Left ventricle myocardium inferior (tissue), 1 donor: ENCODE measurements at regions of chr3 and their contacts with region 1.

Region 1: GRCh38 chr3:129558772-129559564 is 16.0 kb downstream of the H1-8 start:
- DNase-seq: no peak
- H3K4me3 ChIP-seq: no peak overlapping the region
- H3K27ac ChIP-seq: peak overlapping the region; percentile 93
- H3K4me1 ChIP-seq: peaks cover 99% of the 10 kb centered on the region
- H3K27me3 ChIP-seq: no peaks in the 10 kb centered on the region
- CTCF ChIP-seq: no peak

Region 2: GRCh38 chr3:129077222-129077621 is 481.7 kb before region 1 on chr3:
- intact Hi-C with region 1: no loop called
- DNase-seq: no peak
- H3K4me3 ChIP-seq: no peak overlapping the region
- H3K27ac ChIP-seq: no peak overlapping the region
- H3K4me1 ChIP-seq: no peaks in the 10 kb centered on the region
- H3K27me3 ChIP-seq: no peaks in the 10 kb centered on the region
- CTCF ChIP-seq: no peak

Region 3: DNA sequence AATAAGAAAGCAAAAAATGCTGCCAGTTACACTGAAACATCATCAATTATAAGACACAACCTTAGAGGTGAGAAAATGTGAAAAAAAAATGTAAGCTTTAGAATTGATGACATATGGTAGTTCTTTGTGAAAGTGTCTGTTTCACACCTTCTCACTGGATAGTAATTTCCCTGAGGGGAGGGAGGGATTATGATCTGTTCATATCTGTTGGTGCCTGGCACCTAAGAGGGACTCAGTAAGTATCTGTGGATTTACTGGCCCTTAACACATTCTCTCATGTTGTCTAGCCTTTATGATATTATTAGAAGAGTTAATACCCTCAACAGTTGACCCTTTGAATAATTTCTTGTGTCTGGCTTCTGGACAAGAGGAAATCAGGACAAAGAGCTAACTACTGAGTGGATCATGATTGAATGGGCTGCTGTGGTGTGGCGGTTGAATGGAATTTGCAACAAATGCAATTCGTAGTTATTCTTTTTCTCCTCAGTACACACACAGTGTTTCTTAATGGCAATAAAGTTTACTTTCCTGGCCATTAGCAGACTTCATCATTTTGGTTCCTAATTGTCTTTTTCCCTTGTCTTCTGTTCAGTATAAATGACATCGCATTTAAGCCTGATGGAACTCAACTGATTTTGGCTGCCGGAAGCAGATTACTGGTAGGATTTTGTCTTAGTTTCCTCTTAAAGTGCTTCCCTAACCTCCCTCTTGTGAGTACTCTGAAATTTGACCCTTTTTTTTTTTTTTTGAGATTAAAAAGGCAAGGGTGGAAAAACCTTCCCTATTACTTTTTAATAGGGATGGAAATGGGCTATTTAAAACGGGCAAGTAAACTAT is 109.5 kb before region 1 on chr3:
- intact Hi-C with region 1: no loop called
- DNase-seq: no peak
- H3K4me3 ChIP-seq: no peak overlapping the region
- H3K27ac ChIP-seq: peak overlapping the region; percentile 23
- H3K4me1 ChIP-seq: peaks cover 30% of the 10 kb centered on the region
- H3K27me3 ChIP-seq: no peaks in the 10 kb centered on the region
- CTCF ChIP-seq: no peak

Region 4: GRCh38 chr3:129507181-129507831 is 51.7 kb before region 1 on chr3:
- intact Hi-C with region 1: loop called (anchors 10 kb)
- DNase-seq: peak; percentile 55
- H3K4me3 ChIP-seq: no peak overlapping the region
- H3K27ac ChIP-seq: peak overlapping the region; percentile 54
- H3K4me1 ChIP-seq: peaks cover 70% of the 10 kb centered on the region
- H3K27me3 ChIP-seq: no peaks in the 10 kb centered on the region
- CTCF ChIP-seq: no peak